Natural killer cell (primary cell): ENCODE measurements at regions of chr15 and their contacts with region 1.

Region 1: DNA sequence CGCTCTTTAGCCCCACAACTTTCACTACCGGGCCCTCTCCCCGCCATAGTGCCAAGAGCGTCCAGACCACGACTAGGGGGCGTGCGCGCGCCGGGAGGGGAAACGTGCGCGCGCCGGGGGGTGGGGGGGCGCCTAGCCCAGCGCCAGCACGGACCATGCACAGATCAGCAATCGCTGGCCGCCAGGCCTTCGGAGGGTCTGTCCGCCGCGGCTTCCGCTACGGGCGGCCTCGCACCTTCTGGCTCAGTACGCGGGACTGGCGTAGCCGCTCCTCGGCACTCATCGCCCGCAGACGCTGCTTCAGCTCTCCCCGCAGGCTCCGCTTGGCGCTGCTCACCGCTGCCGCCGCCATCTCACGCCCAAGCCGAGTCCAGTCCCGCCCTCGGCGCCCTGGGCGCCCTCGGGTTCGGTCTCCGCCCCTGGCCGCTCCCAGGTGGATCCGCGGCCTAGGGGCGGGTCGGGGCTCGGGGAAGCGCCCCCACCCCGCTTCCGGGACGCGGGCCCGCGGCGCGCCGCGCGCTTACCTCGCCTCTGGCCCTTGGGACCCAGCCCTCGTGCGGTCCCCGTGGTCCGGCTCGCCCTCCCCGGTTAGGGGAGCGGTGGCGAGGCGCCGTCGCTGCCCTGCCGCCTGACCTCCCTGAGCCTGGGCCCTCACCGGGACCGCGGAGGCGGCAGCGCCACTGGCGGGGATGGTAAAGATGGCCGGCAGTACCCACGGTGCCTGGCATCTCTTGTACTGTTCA is at the start of gene MTHFS:
- DNase-seq: peak; percentile 71 to 90
- ATAC-seq: peak; percentile 80 to 92 (median 85)
- H3K4me3 ChIP-seq: peak within 1 kb of the TSS; percentile 54
- H3K4me3 Mint-ChIP-seq: peak within 1 kb of the TSS; percentile 97
- H3K27ac ChIP-seq: peak within 1 kb of the TSS; percentile 93
- H3K27ac Mint-ChIP-seq: peak within 1 kb of the TSS; percentile 95 to 96
- H3K4me1 ChIP-seq: peaks cover 17% of the 10 kb centered on the region
- H3K4me1 Mint-ChIP-seq: peaks cover 17 to 34% of the 10 kb centered on the region in 2 donors
- H3K27me3 ChIP-seq: no peaks in the 10 kb centered on the region
- H3K27me3 Mint-ChIP-seq: no peaks in the 10 kb centered on the region
- CTCF ChIP-seq: peak; percentile 38
- total RNA-seq, gene MTHFS: 7.0 to 10.8 (median 10.5) TPM

Region 2: DNA sequence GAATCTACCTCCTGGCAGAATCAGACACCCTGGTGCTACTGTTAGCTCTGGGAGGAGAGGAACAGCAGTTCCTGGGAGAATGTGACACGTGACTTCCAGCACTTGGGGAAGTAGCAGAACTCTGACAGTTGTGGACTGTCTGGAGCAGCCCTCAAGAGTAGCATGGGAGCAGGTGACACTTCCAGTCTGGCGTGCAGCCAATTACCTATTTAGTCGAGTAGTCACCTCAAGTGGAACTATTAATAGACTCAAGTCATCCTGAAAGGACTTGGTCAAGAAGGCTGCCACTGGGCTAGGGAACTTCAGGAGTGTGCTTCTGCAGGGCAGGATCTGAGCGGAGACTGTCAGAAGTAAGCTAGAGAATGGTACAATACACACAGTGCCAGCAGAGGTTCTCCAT is 62.3 kb before region 1 on chr15:
- intact Hi-C with region 1: no loop called
- DNase-seq: no peak
- ATAC-seq: no peak
- H3K4me3 ChIP-seq: no peak overlapping the region
- H3K4me3 Mint-ChIP-seq: no peak overlapping the region
- H3K27ac ChIP-seq: no peak overlapping the region
- H3K27ac Mint-ChIP-seq: no peak overlapping the region
- H3K4me1 ChIP-seq: peaks cover 16% of the 10 kb centered on the region
- H3K4me1 Mint-ChIP-seq: peaks cover 32 to 33% of the 10 kb centered on the region in 2 donors
- H3K27me3 ChIP-seq: no peaks in the 10 kb centered on the region
- H3K27me3 Mint-ChIP-seq: no peaks in the 10 kb centered on the region
- CTCF ChIP-seq: no peak

Region 3: GRCh38 chr15:80072285-80072994 is 175.6 kb after region 1 on chr15:
- intact Hi-C with region 1: loop called (anchors 10 kb)
- DNase-seq: peak in 1 of 2 donors; percentile 72
- ATAC-seq: peak; percentile 92 to 98 (median 97)
- H3K4me3 ChIP-seq: peak overlapping the region; percentile 18
- H3K4me3 Mint-ChIP-seq: peak overlapping the region; percentile 89
- H3K27ac ChIP-seq: no peak overlapping the region
- H3K27ac Mint-ChIP-seq: peak overlapping the region; percentile 77 to 86
- H3K4me1 ChIP-seq: no peaks in the 10 kb centered on the region
- H3K4me1 Mint-ChIP-seq: peaks cover 54 to 64% of the 10 kb centered on the region in 2 donors
- H3K27me3 ChIP-seq: no peaks in the 10 kb centered on the region
- H3K27me3 Mint-ChIP-seq: no peaks in the 10 kb centered on the region
- CTCF ChIP-seq: no peak